CD4-positive, alpha-beta memory T cell (primary cell): ENCODE measurements at regions of chr4 and their contacts with region 1.

Region 1: DNA sequence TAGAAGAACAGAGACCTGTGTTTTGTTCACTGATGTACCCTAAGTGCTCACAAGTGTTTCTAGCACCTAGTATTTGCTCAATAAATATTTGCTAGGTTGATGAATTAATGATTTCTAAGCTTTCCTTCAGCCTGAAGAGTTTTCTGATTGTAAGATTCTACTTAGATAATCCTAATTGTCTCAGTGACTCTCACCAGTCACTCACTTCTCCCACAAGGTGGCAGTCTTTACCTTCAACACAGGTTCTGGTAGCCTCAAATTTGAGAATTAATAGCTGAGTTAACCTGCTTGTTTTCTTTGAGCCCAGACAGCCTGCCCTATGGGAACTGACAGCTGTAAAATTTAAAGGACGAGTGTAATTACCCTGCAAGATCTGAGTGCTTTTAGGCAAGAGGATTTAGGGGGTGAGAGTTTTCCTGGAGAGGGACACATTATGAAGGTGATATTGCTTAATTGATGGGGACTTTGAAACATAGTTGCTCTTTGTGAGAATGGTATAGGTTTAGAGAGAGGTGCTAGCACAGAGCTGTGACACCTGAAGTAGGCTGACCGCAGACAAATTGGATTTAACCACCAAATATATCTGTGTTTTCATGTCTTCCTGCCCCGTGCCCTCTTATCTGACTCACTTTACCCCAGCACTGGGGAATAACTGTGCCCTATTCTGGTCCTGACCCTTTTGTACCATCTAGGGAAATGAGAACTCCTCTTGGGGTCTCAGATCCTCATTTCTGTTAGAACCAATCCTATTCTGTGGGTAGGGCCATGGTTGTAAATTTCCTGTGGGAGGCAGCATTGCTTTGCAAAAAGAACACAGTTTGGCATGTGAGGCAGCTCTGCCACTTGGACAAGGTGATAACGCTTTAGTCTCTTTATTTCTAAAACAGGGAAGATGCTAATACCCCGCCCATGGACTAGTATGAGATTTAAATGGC is 27.7 kb downstream of the CD38 start:
- DNase-seq: peak in 4 of 5 donors; percentile 43 to 53 (median 50)
- H3K4me3 ChIP-seq: no peak overlapping the region
- H3K4me3 Mint-ChIP-seq: no peak overlapping the region
- H3K27ac ChIP-seq: no peak overlapping the region
- H3K27ac Mint-ChIP-seq: no peak overlapping the region
- H3K4me1 ChIP-seq: peaks cover 7% of the 10 kb centered on the region
- H3K4me1 Mint-ChIP-seq: peaks cover 9 to 11% (median 9%) of the 10 kb centered on the region in 4 donors
- H3K27me3 ChIP-seq: no peaks in the 10 kb centered on the region
- H3K27me3 Mint-ChIP-seq: peaks cover 0 to 3% of the 10 kb centered on the region in 2 donors

Region 2: GRCh38 chr4:15729910-15730533 is 75.8 kb before region 1 on chr4:
- CTCF ChIA-PET with region 1: interaction called, 23 read pairs
- POLR2A ChIA-PET with region 1: no interaction called
- intact Hi-C with region 1: loop called (anchors 1 kb)
- DNase-seq: peak in 4 of 5 donors; percentile 46 to 60 (median 54)
- H3K4me3 ChIP-seq: no peak overlapping the region
- H3K4me3 Mint-ChIP-seq: no peak overlapping the region
- H3K27ac ChIP-seq: no peak overlapping the region
- H3K27ac Mint-ChIP-seq: no peak overlapping the region
- H3K4me1 ChIP-seq: peaks cover 3% of the 10 kb centered on the region
- H3K4me1 Mint-ChIP-seq: peaks cover 4 to 11% (median 8%) of the 10 kb centered on the region in 4 donors
- H3K27me3 ChIP-seq: no peaks in the 10 kb centered on the region
- H3K27me3 Mint-ChIP-seq: peaks cover 1 to 2% of the 10 kb centered on the region in 2 donors

Region 3: GRCh38 chr4:16001484-16001858 is 195.6 kb after region 1 on chr4:
- CTCF ChIA-PET with region 1: interaction called, 7 read pairs
- POLR2A ChIA-PET with region 1: no interaction called
- intact Hi-C with region 1: loop called (anchors 1 kb)
- DNase-seq: peak; percentile 31 to 43 (median 36)
- H3K4me3 ChIP-seq: no peak overlapping the region
- H3K4me3 Mint-ChIP-seq: no peak overlapping the region
- H3K27ac ChIP-seq: no peak overlapping the region
- H3K27ac Mint-ChIP-seq: no peak overlapping the region
- H3K4me1 ChIP-seq: no peaks in the 10 kb centered on the region
- H3K4me1 Mint-ChIP-seq: peaks cover 0 to 1% (median 0%) of the 10 kb centered on the region in 4 donors
- H3K27me3 ChIP-seq: no peaks in the 10 kb centered on the region
- H3K27me3 Mint-ChIP-seq: peaks cover 5 to 17% of the 10 kb centered on the region in 2 donors

Region 4: GRCh38 chr4:16642895-16643294 is 837.0 kb after region 1 on chr4:
- CTCF ChIA-PET with region 1: no interaction called
- POLR2A ChIA-PET with region 1: no interaction called
- intact Hi-C with region 1: no loop called
- DNase-seq: no peak
- H3K4me3 ChIP-seq: no peak overlapping the region
- H3K4me3 Mint-ChIP-seq: no peak overlapping the region
- H3K27ac ChIP-seq: no peak overlapping the region
- H3K27ac Mint-ChIP-seq: no peak overlapping the region
- H3K4me1 ChIP-seq: no peaks in the 10 kb centered on the region
- H3K4me1 Mint-ChIP-seq: no peaks in the 10 kb centered on the region
- H3K27me3 ChIP-seq: no peaks in the 10 kb centered on the region
- H3K27me3 Mint-ChIP-seq: no peaks in the 10 kb centered on the region